Kidney (tissue), 22 donors: ENCODE measurements at regions of chr17 and their contacts with region 1.

Region 1: DNA sequence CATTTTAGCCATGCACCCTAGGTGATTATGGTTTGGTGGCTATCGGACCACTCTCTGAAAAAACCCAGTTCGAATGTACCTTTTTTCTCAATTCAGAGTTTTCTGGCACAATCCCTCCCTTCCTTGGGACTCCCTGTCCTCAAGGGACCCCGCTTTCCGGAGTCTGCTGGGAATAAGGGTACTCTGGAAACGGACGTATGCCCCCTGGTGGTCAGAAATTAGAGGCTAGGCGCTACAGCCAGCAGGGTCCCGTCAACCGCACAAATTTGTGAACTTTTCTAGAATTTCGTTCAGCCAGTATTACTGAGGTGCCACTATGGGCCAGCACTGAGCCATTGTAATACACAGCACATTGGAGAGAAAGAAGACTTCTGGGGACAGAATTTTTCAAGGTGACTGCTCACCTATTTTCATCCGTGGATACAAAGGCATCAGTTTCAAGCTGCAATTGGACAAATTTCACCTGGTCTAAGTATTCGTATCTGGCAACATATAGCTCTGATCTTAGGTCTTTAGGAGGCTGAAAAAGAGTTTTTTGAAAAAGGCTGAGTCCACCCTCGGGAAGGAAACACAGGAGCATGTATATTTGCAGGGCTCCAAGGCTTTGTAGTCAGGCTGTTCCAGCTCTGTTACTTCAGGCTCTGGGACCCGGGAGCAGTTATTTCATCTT is 27.1 kb upstream of the CRYBA1 start:
- DNase-seq: peak; percentile 80 to 95 (median 85)
- H3K4me3 ChIP-seq: peak overlapping the region in 1 of 3 donors; percentile 34
- H3K27ac ChIP-seq: no peak overlapping the region
- H3K4me1 ChIP-seq: peaks cover 0 to 3% (median 0%) of the 10 kb centered on the region in 3 donors
- H3K27me3 ChIP-seq: no peaks in the 10 kb centered on the region
- CTCF ChIP-seq: peak; percentile 86

Region 2: GRCh38 chr17:29148790-29149430 is 70.6 kb before region 1 on chr17:
- intact Hi-C with region 1: loop called (anchors 2 kb)
- DNase-seq: peak; percentile 96 to 98 (median 97)
- H3K4me3 ChIP-seq: peak overlapping the region; percentile 61 to 76 (median 65)
- H3K27ac ChIP-seq: peak overlapping the region; percentile 78 to 84
- H3K4me1 ChIP-seq: peaks cover 0 to 17% (median 9%) of the 10 kb centered on the region in 3 donors
- H3K27me3 ChIP-seq: no peaks in the 10 kb centered on the region
- CTCF ChIP-seq: peak; percentile 99

Region 3: GRCh38 chr17:29347831-29348629 is 128.5 kb after region 1 on chr17:
- intact Hi-C with region 1: no loop called
- DNase-seq: peak in 2 of 5 donors; percentile 23 to 48
- H3K4me3 ChIP-seq: peak overlapping the region in 1 of 3 donors; percentile 15
- H3K27ac ChIP-seq: no peak overlapping the region
- H3K4me1 ChIP-seq: no peaks in the 10 kb centered on the region
- H3K27me3 ChIP-seq: no peaks in the 10 kb centered on the region
- CTCF ChIP-seq: no peak